CD8-positive, alpha-beta memory T cell (primary cell): ENCODE measurements at regions of chr6 and their contacts with region 1.

Region 1: GRCh38 chr6:136792410-136793262 is at the start of gene MAP3K5:
- DNase-seq: peak; percentile 88 to 96 (median 92)
- H3K4me3 ChIP-seq: peak within 1 kb of the TSS; percentile 99
- H3K4me3 Mint-ChIP-seq: peak within 1 kb of the TSS; percentile 94 to 99 (median 98)
- H3K27ac ChIP-seq: peak within 1 kb of the TSS; percentile 94
- H3K27ac Mint-ChIP-seq: peak within 1 kb of the TSS; percentile 94 to 99 (median 96)
- H3K4me1 ChIP-seq: peaks cover 39% of the 10 kb centered on the region
- H3K4me1 Mint-ChIP-seq: peaks cover 34 to 43% (median 41%) of the 10 kb centered on the region in 3 donors
- H3K27me3 ChIP-seq: no peaks in the 10 kb centered on the region
- H3K27me3 Mint-ChIP-seq: no peaks in the 10 kb centered on the region
- total RNA-seq, gene MAP3K5: 12.6 to 12.9 TPM

Region 2: DNA sequence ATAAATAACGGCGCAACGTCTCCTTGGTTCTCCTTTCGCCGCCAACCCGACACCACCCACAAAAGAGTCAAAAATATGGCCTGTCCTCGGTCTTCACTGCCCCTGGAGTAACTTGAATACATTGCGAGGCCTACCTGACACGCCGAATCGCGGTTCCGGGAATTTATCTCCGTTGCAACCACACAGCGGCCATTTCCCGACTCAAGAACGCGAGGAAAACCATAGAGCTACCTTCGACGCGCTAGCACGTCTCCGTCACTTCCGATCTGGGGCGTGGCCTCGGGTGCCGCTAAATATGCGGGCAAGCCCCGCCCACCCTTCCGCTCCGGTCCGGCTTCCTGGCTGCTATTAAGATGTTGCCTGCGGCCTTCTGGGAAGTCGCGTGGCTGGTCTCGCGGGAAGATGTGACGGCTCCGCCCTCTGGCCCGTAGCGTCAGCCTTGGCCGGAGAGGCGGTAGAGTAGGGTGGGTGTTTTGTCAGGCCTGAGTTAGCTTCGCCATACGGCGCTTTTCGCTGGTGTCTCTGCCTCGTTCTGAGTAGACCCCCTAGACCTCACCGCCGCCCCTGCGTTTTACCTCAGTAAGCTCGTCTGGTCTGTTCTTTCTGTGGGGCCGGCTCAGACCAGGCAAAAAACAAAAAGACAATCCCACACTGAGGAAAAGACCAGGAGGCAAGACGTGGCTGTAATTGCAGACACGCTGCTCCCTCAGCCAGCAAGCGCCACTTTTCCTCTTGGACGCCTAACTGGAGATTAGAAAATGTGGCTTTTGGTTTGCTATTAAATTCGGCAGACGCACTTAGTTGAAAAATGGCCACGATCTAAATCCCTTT is 502.8 kb before region 1 on chr6 and contains the start of gene BCLAF1:
- CTCF ChIA-PET with region 1: interaction called, 9 read pairs
- POLR2A ChIA-PET with region 1: interaction called, 10 read pairs
- DNase-seq: peak; percentile 99 to 100 (median 100)
- H3K4me3 ChIP-seq: peak within 1 kb of the TSS; percentile 97
- H3K4me3 Mint-ChIP-seq: peak within 1 kb of the TSS; percentile 94 to 98 (median 98)
- H3K27ac ChIP-seq: peak within 1 kb of the TSS; percentile 100
- H3K27ac Mint-ChIP-seq: peak within 1 kb of the TSS; percentile 99 to 100 (median 100)
- H3K4me1 ChIP-seq: peaks cover 58% of the 10 kb centered on the region
- H3K4me1 Mint-ChIP-seq: peaks cover 53 to 71% (median 58%) of the 10 kb centered on the region in 3 donors
- H3K27me3 ChIP-seq: no peaks in the 10 kb centered on the region
- H3K27me3 Mint-ChIP-seq: peaks cover 0 to 19% of the 10 kb centered on the region in 2 donors
- total RNA-seq, gene BCLAF1: 247 to 269 TPM

Region 3: DNA sequence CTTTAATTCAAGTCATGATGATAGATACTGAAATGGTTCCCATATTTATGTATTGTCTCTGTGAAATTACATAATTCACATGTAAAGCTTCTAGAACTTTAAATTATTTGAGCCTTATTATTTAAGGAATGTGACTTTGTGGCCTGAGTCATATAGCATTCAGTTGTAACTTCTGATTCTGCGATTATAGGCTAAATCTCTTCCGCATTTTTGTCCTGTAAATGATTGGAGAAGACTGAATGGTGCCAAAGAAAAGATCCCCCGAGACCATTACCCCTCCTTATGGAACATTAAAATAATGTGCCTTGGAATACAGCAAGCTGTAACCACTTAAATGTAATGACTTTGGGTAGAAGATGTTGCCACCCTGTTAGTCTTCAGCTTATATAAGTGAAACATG is 179.2 kb before region 1 on chr6:
- CTCF ChIA-PET with region 1: interaction called, 20 read pairs
- POLR2A ChIA-PET with region 1: no interaction called
- DNase-seq: no peak
- H3K4me3 ChIP-seq: no peak overlapping the region
- H3K4me3 Mint-ChIP-seq: no peak overlapping the region
- H3K27ac ChIP-seq: no peak overlapping the region
- H3K27ac Mint-ChIP-seq: no peak overlapping the region
- H3K4me1 ChIP-seq: no peaks in the 10 kb centered on the region
- H3K4me1 Mint-ChIP-seq: peaks cover 3 to 13% (median 4%) of the 10 kb centered on the region in 3 donors
- H3K27me3 ChIP-seq: no peaks in the 10 kb centered on the region
- H3K27me3 Mint-ChIP-seq: peaks cover 0 to 2% of the 10 kb centered on the region in 2 donors

Region 4: DNA sequence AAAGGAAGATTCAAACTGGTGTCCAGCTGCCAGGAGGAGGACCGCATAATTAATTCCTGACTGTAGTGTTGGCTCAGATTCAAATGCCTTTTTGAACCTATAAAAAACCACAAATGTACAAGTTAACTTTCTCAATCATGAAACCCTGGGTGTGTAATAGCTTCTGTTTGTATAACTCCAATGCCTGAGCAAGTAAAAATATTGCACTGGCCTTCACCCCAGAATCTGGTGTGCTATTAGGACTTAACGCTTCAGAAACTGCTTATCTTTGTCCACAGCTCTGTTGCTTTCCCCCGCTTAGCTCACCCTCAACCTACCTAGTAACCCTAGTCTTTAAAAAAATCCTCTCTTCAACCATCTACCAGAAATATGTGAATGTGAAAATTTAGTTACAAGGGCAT is 123.3 kb before region 1 on chr6:
- CTCF ChIA-PET with region 1: interaction called, 18 read pairs
- POLR2A ChIA-PET with region 1: no interaction called
- DNase-seq: no peak
- H3K4me3 ChIP-seq: no peak overlapping the region
- H3K4me3 Mint-ChIP-seq: no peak overlapping the region
- H3K27ac ChIP-seq: no peak overlapping the region
- H3K27ac Mint-ChIP-seq: no peak overlapping the region
- H3K4me1 ChIP-seq: no peaks in the 10 kb centered on the region
- H3K4me1 Mint-ChIP-seq: peaks cover 0 to 6% (median 0%) of the 10 kb centered on the region in 3 donors
- H3K27me3 ChIP-seq: no peaks in the 10 kb centered on the region
- H3K27me3 Mint-ChIP-seq: no peaks in the 10 kb centered on the region

Region 5: GRCh38 chr6:136723780-136724179 is 68.9 kb before region 1 on chr6:
- CTCF ChIA-PET with region 1: interaction called, 21 read pairs
- POLR2A ChIA-PET with region 1: interaction called, 5 read pairs
- DNase-seq: peak; percentile 7 to 61 (median 23)
- H3K4me3 ChIP-seq: no peak overlapping the region
- H3K4me3 Mint-ChIP-seq: peak overlapping the region in 4 of 7 donors; percentile 20 to 74 (median 44)
- H3K27ac ChIP-seq: no peak overlapping the region
- H3K27ac Mint-ChIP-seq: peak overlapping the region in 7 of 8 donors; percentile 4 to 80 (median 45)
- H3K4me1 ChIP-seq: peaks cover 5% of the 10 kb centered on the region
- H3K4me1 Mint-ChIP-seq: peaks cover 50 to 64% (median 57%) of the 10 kb centered on the region in 3 donors
- H3K27me3 ChIP-seq: no peaks in the 10 kb centered on the region
- H3K27me3 Mint-ChIP-seq: no peaks in the 10 kb centered on the region

Region 6: GRCh38 chr6:136751522-136751956 is 41.1 kb before region 1 on chr6:
- CTCF ChIA-PET with region 1: interaction called, 82 read pairs
- POLR2A ChIA-PET with region 1: interaction called, 19 read pairs
- DNase-seq: peak in 2 of 5 donors; percentile 47 to 55
- H3K4me3 ChIP-seq: peak overlapping the region; percentile 53
- H3K4me3 Mint-ChIP-seq: peak overlapping the region; percentile 24 to 83 (median 79)
- H3K27ac ChIP-seq: no peak overlapping the region
- H3K27ac Mint-ChIP-seq: peak overlapping the region; percentile 52 to 96 (median 90)
- H3K4me1 ChIP-seq: peaks cover 59% of the 10 kb centered on the region
- H3K4me1 Mint-ChIP-seq: peaks cover 75 to 94% (median 93%) of the 10 kb centered on the region in 3 donors
- H3K27me3 ChIP-seq: no peaks in the 10 kb centered on the region
- H3K27me3 Mint-ChIP-seq: no peaks in the 10 kb centered on the region

Region 7: DNA sequence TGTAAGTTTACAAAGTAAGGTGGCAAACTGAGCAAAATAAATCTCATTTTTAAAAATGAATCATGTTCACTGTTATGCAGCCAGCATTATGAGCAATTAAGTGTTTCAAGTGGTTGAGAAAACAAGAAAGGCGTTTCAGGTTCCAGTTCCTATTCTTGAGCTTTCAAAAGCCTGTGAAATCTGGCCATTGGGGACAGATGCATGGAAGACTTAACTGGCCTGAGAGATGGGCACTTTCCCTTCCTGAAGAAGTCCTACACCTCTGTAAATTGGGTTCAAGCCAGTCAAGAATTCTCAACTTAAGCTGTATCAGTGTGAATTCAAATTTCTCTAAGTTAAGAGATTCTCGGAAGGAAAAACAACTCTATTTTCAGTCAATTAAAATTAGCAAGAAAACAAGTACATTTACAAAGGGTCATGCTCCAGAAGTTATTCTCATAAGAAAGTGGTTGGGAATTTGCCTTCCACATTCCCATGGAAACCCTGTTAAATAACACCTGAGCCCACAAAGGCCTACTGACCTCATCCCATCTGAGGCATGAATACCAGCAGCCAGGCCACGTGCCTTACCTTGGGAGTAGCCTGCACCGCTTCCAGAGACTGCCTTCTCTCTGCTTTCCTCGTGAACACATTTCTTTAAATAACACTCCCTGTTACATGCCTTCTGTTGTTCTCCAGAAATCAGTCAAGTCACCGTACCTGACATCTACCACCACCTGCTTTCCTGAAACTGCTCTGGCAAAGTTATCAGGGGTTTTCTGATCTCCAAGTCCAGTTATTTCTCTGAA is 19.8 kb before region 1 on chr6:
- CTCF ChIA-PET with region 1: interaction called, 18 read pairs
- POLR2A ChIA-PET with region 1: interaction called, 5 read pairs
- DNase-seq: no peak
- H3K4me3 ChIP-seq: no peak overlapping the region
- H3K4me3 Mint-ChIP-seq: peak overlapping the region in 3 of 7 donors; percentile 10 to 64 (median 62)
- H3K27ac ChIP-seq: no peak overlapping the region
- H3K27ac Mint-ChIP-seq: peak overlapping the region; percentile 0 to 86 (median 32)
- H3K4me1 ChIP-seq: peaks cover 11% of the 10 kb centered on the region
- H3K4me1 Mint-ChIP-seq: peaks cover 62 to 88% (median 83%) of the 10 kb centered on the region in 3 donors
- H3K27me3 ChIP-seq: no peaks in the 10 kb centered on the region
- H3K27me3 Mint-ChIP-seq: no peaks in the 10 kb centered on the region

Region 8: GRCh38 chr6:136812174-136812573 is 19.5 kb after region 1 on chr6:
- CTCF ChIA-PET with region 1: no interaction called
- POLR2A ChIA-PET with region 1: no interaction called
- DNase-seq: no peak
- H3K4me3 ChIP-seq: no peak overlapping the region
- H3K4me3 Mint-ChIP-seq: no peak overlapping the region
- H3K27ac ChIP-seq: no peak overlapping the region
- H3K27ac Mint-ChIP-seq: no peak overlapping the region
- H3K4me1 ChIP-seq: no peaks in the 10 kb centered on the region
- H3K4me1 Mint-ChIP-seq: no peaks in the 10 kb centered on the region
- H3K27me3 ChIP-seq: no peaks in the 10 kb centered on the region
- H3K27me3 Mint-ChIP-seq: peaks cover 2% of the 10 kb centered on the region in 2 donors